IMR-90 (cell line): ENCODE measurements at regions of chr13 and their contacts with region 1.

Region 1: DNA sequence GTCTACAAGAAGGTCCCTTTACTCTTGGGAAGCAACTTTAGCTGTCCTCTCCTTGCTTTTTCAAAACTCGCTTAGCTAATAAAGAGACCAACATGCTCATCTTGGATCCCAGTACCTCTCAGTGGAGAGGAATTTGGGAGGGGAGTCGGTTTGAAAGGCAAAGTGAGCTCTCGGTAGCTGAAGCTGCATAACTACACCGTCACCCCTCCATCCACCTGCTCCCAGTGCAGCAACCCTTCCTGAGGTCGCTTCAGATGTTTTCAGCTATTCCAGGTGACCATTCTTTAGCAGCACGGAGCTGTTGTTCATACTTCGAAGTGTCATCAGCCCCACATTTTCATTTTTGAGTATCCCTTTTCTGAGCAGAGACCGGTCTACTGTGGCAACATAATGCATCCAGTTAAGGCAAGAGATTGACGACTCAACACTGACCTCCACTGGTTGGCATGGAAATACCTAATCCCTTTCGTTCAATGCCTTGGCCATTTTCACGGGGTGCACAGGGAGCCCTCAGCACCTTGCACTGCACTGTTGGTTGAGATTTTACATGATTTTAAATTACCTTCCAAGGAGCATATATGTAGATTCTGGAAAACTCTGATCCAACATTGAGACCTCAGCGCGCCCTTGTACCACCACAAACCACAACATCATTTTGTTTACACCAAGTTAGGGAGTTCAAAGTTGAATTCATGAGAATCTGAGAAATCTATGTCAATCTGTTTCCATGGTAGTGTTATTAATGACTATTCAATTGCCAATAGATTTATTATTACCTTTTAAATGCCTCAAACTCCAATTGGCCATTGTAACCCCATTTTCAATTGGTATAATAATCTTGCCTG is 42.2 kb downstream of the DLEU7 start:
- DNase-seq: peak; percentile 72
- ATAC-seq: peak; percentile 97
- H3K4me3 ChIP-seq: no peak overlapping the region
- H3K27ac ChIP-seq: no peak overlapping the region
- H3K4me1 ChIP-seq: peaks cover 1% of the 10 kb centered on the region; the same call in 1 of the 2 replicates
- H3K27me3 ChIP-seq: peaks cover 18% of the 10 kb centered on the region
- CTCF ChIP-seq: peak; percentile 82
- POLR2A ChIP-seq: no peak
- RAD21 ChIP-seq: peak; percentile 90

Region 2: GRCh38 chr13:49669735-49670309 is 1131.5 kb before region 1 on chr13:
- CTCF ChIA-PET with region 1: no interaction called
- POLR2A ChIA-PET with region 1: no interaction called
- dilution Hi-C with region 1: no loop called
- in situ Hi-C with region 1: loop called (anchors 10 kb)
- intact Hi-C with region 1: loop called (anchors 1 kb)
- DNase-seq: peak; percentile 81
- ATAC-seq: peak; percentile 98
- H3K4me3 ChIP-seq: no peak overlapping the region
- H3K27ac ChIP-seq: no peak overlapping the region
- H3K4me1 ChIP-seq: peaks cover 5% of the 10 kb centered on the region
- H3K27me3 ChIP-seq: no peaks in the 10 kb centered on the region
- CTCF ChIP-seq: peak; percentile 94
- POLR2A ChIP-seq: peak; percentile 61; the same call in 1 of the 2 replicates
- RAD21 ChIP-seq: peak; percentile 98

Region 3: DNA sequence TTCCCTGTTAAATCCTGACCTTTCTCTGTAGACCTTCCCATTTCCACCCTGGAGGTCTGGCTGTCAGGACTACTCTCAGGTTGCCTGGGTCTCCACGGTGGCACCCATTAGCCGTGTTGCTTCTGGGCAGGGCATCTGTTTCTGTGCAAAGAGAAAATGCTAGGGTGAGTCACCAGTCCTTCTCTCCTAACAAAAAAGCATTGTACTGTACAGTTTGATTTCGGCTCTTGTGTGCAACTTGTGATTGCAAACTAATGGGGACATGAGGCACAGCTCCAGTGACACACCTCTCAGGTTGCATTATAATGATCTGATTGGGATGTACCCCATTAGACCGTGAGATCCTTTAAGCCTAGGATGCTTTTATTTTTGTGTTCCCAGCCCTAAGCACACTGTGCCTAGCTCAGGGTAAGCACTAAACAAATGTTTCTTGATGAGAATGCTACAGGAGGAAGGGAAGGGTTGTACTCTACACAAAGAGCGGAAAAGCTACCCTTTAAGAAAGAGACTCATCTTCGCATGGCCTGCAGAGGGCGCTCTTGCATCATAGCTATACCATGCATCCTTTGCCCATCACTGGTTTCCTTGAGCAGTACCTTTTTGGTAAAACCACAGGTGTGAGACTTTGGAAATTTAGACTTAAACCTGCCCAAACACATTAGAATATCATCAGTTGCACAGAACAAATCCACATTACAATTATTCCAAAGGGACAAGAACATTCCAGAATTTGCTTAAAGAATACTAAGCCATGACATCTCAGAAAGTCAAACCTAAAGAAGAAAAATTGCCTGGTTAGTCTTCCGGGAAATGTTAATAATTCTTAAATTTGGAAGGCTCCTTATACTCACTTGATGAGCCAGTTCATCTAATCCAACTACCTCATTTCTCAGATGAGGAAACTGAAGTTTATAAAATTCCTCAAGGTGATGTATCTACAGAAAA is 824.7 kb before region 1 on chr13:
- CTCF ChIA-PET with region 1: interaction called, 3 read pairs
- POLR2A ChIA-PET with region 1: no interaction called
- dilution Hi-C with region 1: no loop called
- in situ Hi-C with region 1: loop called (anchors 5 kb)
- intact Hi-C with region 1: loop called (anchors 1 kb)
- DNase-seq: peak; percentile 70
- ATAC-seq: peak; percentile 86
- H3K4me3 ChIP-seq: no peak overlapping the region
- H3K27ac ChIP-seq: no peak overlapping the region
- H3K4me1 ChIP-seq: peaks cover 4% of the 10 kb centered on the region
- H3K27me3 ChIP-seq: no peaks in the 10 kb centered on the region
- CTCF ChIP-seq: peak; percentile 86
- POLR2A ChIP-seq: no peak
- RAD21 ChIP-seq: peak; percentile 94

Region 4: DNA sequence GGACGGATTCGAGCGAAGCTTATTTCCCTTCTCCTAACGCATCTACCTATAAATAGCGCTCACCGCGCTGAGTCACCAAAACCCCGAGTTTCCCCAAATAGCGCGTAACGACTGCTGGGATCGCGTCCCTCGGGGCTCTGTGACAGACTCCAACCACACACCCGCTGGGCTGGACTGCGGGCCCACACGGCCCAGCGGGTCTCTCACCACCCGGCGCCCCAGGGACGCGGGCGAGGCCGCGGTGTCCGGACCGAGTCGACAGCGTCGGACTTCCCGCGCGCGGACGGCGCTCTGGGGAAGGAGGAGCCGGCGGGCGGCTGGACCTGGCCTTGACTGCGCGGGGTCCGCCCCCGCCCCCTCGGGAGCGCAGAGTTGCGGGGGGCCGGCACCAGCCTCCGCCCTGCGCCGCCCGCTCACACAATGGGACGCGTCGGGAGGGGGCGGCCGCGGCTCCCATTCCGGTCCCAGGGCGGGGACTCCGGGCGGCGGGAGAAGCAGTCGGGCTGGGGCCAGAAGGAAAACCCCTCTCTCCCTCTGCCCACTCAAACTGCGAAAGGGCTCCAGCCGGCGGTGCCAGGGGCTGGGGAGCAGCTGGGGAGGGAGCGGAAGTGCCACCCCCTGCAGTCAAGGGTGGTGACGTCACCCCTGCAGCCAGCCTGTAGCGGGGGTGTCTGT is 677.3 kb before region 1 on chr13:
- CTCF ChIA-PET with region 1: no interaction called
- POLR2A ChIA-PET with region 1: no interaction called
- dilution Hi-C with region 1: no loop called
- in situ Hi-C with region 1: no loop called
- intact Hi-C with region 1: loop called (anchors 2 kb)
- DNase-seq: peak; percentile 97
- ATAC-seq: peak; percentile 72
- H3K4me3 ChIP-seq: peak overlapping the region; percentile 76
- H3K27ac ChIP-seq: peak overlapping the region; percentile 95
- H3K4me1 ChIP-seq: peaks cover 7% of the 10 kb centered on the region
- H3K27me3 ChIP-seq: no peaks in the 10 kb centered on the region
- CTCF ChIP-seq: 0 out of 2 replicates have a peak, but pooled peaks have one; percentile 13
- POLR2A ChIP-seq: peak; percentile 94
- RAD21 ChIP-seq: no peak; the same call in 1 of the 2 replicates

Region 5: DNA sequence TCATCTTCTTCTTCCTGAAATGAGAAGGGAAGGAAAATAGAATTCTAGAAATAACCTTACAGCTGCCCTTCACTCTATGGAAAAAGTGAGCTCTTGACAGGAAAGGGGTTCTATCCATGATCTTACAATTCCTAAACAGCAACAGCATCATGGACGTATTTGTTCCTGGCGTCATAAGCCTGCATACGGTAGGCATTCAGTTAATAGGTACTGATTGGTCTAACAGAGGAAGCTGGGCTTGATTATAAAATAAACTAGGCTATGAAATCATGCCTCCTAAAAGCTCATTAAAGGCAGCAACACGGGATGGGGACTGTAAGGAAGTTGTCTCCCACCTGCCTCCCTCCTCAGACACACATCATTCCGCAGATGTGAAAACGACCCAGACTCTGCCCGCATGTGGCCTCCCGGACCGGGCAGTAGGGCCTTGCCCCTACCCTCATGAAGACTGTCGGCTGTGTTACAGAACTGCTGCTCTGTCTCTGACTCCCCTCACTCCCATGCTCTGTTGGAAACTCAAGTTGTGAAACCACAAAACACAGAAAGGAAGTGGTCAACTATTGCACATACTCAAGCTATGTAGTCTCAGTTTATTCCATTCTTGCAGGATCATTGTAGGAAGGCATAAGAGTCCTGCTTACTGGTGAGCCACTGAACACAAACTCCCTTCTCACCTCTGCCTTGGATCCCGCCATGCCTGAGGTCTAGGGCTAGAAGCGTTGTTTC is 87.6 kb before region 1 on chr13:
- CTCF ChIA-PET with region 1: no interaction called
- POLR2A ChIA-PET with region 1: no interaction called
- dilution Hi-C with region 1: no loop called
- in situ Hi-C with region 1: no loop called
- intact Hi-C with region 1: no loop called
- DNase-seq: peak; percentile 59
- ATAC-seq: 0 out of 2 replicates have a peak, but pooled peaks have one; percentile 11
- H3K4me3 ChIP-seq: no peak overlapping the region
- H3K27ac ChIP-seq: no peak overlapping the region
- H3K4me1 ChIP-seq: no peaks in the 10 kb centered on the region; the same call in 1 of the 2 replicates
- H3K27me3 ChIP-seq: peaks cover 8% of the 10 kb centered on the region
- CTCF ChIP-seq: no peak
- POLR2A ChIP-seq: no peak
- RAD21 ChIP-seq: no peak

Region 6: DNA sequence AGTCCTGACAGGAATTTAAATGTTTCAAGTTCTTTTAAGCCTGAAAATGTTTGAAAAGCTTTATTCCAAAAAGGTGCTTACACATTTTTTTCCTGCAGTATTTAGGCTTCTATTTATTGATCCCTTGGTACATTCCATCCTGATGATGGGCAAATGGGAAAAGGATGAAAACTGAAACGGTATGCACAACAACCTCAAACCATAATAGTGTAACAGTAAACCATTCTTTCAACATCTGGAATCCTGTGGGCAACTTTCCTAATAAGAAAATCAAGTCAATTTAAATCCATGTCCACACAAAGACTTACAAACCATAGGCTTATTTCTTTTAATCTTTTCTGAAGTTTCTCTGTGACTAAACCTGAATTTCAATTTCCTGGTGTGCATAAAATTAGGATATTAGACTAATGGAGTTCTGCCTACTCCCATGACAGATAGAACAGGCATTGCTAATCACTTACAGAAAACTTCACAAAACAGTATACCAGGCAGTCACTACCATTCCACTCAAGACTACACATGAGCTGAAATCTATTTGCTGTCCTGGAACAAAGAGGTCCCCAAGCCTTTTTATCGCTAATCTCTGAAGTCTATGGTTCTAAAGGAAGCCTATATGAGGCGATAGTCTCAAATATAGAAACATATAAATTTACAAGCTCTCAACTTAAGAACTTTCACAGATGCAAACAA is 61.1 kb before region 1 on chr13:
- CTCF ChIA-PET with region 1: no interaction called
- POLR2A ChIA-PET with region 1: no interaction called
- dilution Hi-C with region 1: no loop called
- in situ Hi-C with region 1: no loop called
- intact Hi-C with region 1: loop called (anchors 2 kb)
- DNase-seq: no peak
- ATAC-seq: no peak
- H3K4me3 ChIP-seq: no peak overlapping the region
- H3K27ac ChIP-seq: no peak overlapping the region
- H3K4me1 ChIP-seq: no peaks in the 10 kb centered on the region
- H3K27me3 ChIP-seq: peaks cover 10% of the 10 kb centered on the region
- CTCF ChIP-seq: no peak
- POLR2A ChIP-seq: no peak
- RAD21 ChIP-seq: no peak

Region 7: DNA sequence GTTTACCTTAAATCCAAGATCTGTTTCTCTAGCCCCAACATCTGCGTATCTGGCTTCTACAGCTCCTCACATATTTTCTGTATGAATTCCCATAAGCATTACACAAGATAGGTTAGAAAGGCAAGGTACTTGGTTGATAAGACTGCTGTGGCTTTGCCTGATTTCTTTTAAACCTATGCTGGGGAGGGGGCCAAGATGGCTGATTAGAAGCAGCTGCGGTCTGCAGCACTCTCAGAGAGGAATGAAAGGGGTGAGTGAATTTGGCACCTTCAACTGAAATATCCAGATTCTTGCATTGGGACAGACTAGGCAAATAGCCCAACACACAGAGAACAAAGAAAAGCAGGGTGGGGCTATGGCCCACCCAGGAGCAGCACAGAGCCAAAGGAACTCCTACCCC is 54.4 kb after region 1 on chr13:
- CTCF ChIA-PET with region 1: no interaction called
- POLR2A ChIA-PET with region 1: no interaction called
- dilution Hi-C with region 1: no loop called
- in situ Hi-C with region 1: no loop called
- intact Hi-C with region 1: no loop called
- DNase-seq: no peak
- ATAC-seq: no peak
- H3K4me3 ChIP-seq: no peak overlapping the region
- H3K27ac ChIP-seq: no peak overlapping the region
- H3K4me1 ChIP-seq: no peaks in the 10 kb centered on the region
- H3K27me3 ChIP-seq: 0 out of 2 replicates have a peak, but pooled peaks cover 2% of the 10 kb centered on the region
- CTCF ChIP-seq: no peak
- POLR2A ChIP-seq: no peak
- RAD21 ChIP-seq: no peak